Left lung (tissue), 14 donors: ENCODE measurements at regions of chr18 and their contacts with region 1.

Region 1: GRCh38 chr18:77054606-77055428 is 77.8 kb downstream of the MBP start:
- DNase-seq: peak; percentile 51 to 93 (median 82)
- ATAC-seq: peak; percentile 76
- H3K4me3 ChIP-seq: no peak overlapping the region
- H3K27ac ChIP-seq: peak overlapping the region; percentile 86 to 94
- H3K4me1 ChIP-seq: peaks cover 29 to 64% of the 10 kb centered on the region in 2 donors
- H3K27me3 ChIP-seq: no peaks in the 10 kb centered on the region
- CTCF ChIP-seq: peak in 1 of 2 donors; percentile 50

Region 2: GRCh38 chr18:76970770-76971559 is 83.9 kb before region 1 on chr18:
- intact Hi-C with region 1: no loop called
- DNase-seq: no peak
- ATAC-seq: peak; percentile 65
- H3K4me3 ChIP-seq: no peak overlapping the region
- H3K27ac ChIP-seq: no peak overlapping the region
- H3K4me1 ChIP-seq: no peaks in the 10 kb centered on the region
- H3K27me3 ChIP-seq: no peaks in the 10 kb centered on the region
- CTCF ChIP-seq: no peak

Region 3: DNA sequence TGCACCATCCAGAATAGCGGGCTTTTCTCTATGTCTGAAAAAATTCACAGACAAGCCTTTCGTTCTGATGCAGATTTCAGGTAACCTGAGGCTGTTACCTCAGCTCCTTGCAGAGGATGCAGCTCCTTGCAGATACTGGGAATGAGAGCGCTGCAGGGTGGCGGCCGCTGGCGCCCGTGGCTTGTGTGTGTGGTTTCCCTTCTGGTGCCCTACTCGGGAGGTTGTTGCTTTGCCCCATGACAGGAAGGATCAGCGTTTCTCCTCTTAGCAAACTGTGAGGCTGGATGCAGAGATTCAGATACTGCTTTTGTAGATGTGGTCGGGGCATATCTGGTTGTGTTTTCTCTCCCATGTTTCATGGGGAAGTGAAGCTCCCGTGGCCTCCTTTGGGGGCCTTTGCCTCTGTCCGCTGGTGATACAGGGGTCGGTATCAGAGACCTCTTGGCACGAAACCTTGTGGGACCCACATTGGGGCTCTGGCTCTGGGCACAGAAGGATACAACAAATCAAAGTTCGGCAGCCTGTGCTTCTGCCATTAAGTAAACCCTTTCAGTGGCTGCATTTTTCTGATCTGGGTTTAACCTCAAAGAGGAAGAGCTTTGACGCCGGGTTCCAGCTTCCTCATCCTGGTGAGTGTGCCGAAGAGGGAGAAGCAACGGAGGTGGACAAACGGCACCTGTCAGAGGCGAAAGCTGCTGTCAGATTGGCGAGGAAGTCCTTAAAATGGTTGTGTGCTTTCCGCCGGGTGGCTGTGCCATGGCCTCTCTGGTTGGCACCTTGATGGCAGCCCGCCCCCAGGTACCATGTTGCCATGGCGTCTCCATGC is 50.0 kb before region 1 on chr18:
- intact Hi-C with region 1: loop called in 1 of 2 experiments (anchors 5 kb)
- DNase-seq: peak in 1 of 4 donors; percentile 80
- ATAC-seq: peak; percentile 13
- H3K4me3 ChIP-seq: peak overlapping the region in 1 of 2 donors; percentile 8
- H3K27ac ChIP-seq: peak overlapping the region; percentile 33 to 82
- H3K4me1 ChIP-seq: peaks cover 0 to 46% of the 10 kb centered on the region in 2 donors
- H3K27me3 ChIP-seq: no peaks in the 10 kb centered on the region
- CTCF ChIP-seq: no peak